Common myeloid progenitor, CD34-positive (primary cell): ENCODE measurements at regions of chr11 and their contacts with region 1.

Region 1: GRCh38 chr11:46006418-46007070 is 84.1 kb downstream of the LARGE2 start:
- DNase-seq: peak; percentile 65 to 82 (median 77)
- H3K4me3 ChIP-seq: no peak overlapping the region
- H3K27ac ChIP-seq: no peak overlapping the region
- H3K4me1 ChIP-seq: peaks cover 0 to 7% (median 6%) of the 10 kb centered on the region in 4 experiments
- H3K27me3 ChIP-seq: no peaks in the 10 kb centered on the region

Region 2: GRCh38 chr11:45993531-45994001 is 13.0 kb before region 1 on chr11:
- CTCF ChIA-PET with region 1: interaction called, 17 read pairs
- POLR2A ChIA-PET with region 1: no interaction called
- DNase-seq: no peak
- H3K4me3 ChIP-seq: no peak overlapping the region
- H3K27ac ChIP-seq: no peak overlapping the region
- H3K4me1 ChIP-seq: no peaks in the 10 kb centered on the region
- H3K27me3 ChIP-seq: no peaks in the 10 kb centered on the region

Region 3: DNA sequence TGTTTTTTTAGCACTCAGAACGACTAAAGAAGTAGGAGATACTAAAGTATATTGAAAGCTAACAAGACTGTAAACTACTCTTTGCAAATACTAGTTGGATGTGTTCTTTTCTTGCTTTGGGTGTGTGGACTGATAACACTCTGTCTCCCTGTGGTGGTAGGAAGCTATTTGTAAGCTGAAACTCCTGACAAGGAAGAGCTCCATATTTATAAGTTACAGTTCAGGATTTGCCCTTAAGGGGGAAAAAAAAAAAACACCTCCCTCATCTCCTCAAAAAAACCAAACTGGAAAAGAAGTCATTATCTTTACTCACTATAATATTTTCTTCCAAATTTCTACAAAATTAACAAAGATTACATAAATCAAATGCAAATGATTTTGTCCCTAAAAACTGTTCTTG is 10.8 kb after region 1 on chr11:
- CTCF ChIA-PET with region 1: interaction called, 18 read pairs
- POLR2A ChIA-PET with region 1: no interaction called
- DNase-seq: no peak
- H3K4me3 ChIP-seq: no peak overlapping the region
- H3K27ac ChIP-seq: no peak overlapping the region
- H3K4me1 ChIP-seq: no peaks in the 10 kb centered on the region
- H3K27me3 ChIP-seq: no peaks in the 10 kb centered on the region

Region 4: DNA sequence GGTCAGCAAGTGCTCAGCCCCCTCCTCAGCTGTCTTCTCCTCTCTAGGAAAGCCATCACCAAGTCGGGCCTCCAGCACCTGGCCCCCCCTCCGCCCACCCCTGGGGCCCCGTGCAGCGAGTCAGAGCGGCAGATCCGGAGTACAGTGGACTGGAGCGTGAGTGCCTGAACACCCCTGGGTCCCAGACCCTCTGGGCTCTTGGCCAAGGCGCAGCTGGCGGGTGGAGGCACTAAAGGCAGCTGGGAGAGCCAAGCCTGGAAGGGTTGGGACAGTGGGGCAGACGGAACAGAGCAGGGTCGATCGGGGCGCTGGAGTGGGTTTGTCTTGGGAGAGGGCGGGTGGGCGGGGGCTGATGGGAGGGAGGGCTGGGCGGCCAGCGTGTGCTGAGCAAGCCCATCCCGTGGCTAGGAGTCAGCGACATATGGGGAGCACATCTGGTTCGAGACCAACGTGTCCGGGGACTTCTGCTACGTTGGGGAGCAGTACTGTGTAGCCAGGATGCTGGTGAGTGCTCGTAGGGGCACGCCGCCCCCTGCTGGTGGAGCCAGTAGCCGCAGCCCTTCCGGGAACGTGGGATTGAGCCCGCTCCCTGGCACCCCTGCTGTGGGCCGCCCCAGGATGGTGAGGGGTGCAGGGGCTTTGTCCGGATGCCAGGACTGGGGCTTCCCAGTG is 360.8 kb after region 1 on chr11:
- CTCF ChIA-PET with region 1: no interaction called
- POLR2A ChIA-PET with region 1: no interaction called
- DNase-seq: peak; percentile 60 to 77 (median 75)
- H3K4me3 ChIP-seq: no peak overlapping the region
- H3K27ac ChIP-seq: no peak overlapping the region
- H3K4me1 ChIP-seq: peaks cover 0 to 41% (median 32%) of the 10 kb centered on the region in 4 experiments
- H3K27me3 ChIP-seq: no peaks in the 10 kb centered on the region

Region 5: GRCh38 chr11:46410021-46410420 is 403.5 kb after region 1 on chr11:
- CTCF ChIA-PET with region 1: no interaction called
- POLR2A ChIA-PET with region 1: no interaction called
- DNase-seq: no peak
- H3K4me3 ChIP-seq: no peak overlapping the region
- H3K27ac ChIP-seq: no peak overlapping the region
- H3K4me1 ChIP-seq: no peaks in the 10 kb centered on the region
- H3K27me3 ChIP-seq: no peaks in the 10 kb centered on the region